Activated CD4-positive, alpha-beta T cell treated with anti-CD3 and anti-CD28 coated beads for 36 hours (primary cell): ENCODE measurements at regions of chr12 and their contacts with region 1.

Region 1: DNA sequence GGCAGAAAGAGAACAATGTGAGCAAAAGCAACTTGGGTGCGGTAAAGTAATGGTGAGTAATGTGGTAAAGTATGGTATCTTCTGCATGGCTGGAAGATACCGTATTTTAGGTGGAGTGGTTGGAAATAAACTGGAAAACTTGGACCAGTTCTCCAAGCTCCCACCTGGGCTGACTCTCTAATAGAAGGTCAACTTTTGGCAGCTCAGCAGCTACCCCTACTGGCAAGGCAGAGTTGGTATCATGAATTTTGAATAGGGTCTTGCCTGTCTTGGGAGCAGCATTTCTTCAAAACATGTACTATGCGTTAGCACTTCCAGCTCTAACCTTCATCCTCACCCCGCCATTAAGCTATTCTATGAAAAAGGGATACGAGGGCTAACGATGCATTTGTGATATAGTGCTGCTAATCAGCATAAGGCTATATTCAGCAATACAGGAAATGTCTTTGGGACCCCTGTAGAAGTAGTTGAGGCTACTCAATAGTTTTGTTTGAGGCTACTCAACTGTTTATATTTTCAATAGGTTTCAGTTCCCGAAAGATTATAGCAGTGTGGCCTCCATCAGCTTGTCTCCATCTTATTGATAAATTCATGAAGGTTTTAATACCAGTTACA is 276.3 kb upstream of the FAR2 start:
- DNase-seq: peak; percentile 61
- ATAC-seq: no peak
- H3K4me3 Mint-ChIP-seq: no peak overlapping the region
- H3K27ac Mint-ChIP-seq: no peak overlapping the region
- H3K4me1 Mint-ChIP-seq: no peaks in the 10 kb centered on the region
- H3K27me3 Mint-ChIP-seq: peaks cover 7% of the 10 kb centered on the region

Region 2: DNA sequence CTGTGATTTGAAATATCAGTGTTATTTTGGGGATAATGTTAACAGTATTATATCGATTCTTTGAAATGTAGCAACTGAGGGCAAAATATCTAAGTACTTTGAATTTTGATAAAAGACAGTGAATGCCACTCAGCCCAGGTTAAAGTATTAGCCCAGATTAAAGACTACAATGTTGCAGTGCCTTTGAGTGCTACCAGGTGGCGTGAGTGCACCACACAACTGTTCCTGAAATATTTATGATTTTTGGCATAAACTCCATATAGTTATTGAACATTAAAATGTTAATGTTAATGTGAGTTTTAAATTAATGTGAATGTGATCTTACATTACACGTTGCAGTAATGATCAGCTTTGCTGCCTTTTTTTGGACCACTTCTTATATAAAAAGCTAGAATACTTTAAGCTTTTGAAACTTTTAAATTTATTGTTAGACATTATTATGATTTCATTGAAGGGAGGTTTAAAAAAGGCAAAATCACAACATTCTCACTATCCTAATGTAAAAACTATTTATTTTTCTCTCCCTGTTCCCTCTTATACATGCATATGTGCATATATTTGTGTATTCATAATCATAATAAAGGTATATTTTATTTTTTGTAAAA is 1139.6 kb before region 1 on chr12:
- CTCF ChIA-PET with region 1: interaction called, 4 read pairs
- POLR2A ChIA-PET with region 1: no interaction called
- intact Hi-C with region 1: loop called in 1 of 2 experiments (anchors 2 kb)
- DNase-seq: peak; percentile 60
- ATAC-seq: peak; percentile 42
- H3K4me3 Mint-ChIP-seq: no peak overlapping the region
- H3K27ac Mint-ChIP-seq: no peak overlapping the region
- H3K4me1 Mint-ChIP-seq: no peaks in the 10 kb centered on the region
- H3K27me3 Mint-ChIP-seq: no peaks in the 10 kb centered on the region

Region 3: GRCh38 chr12:27969624-27970400 is 902.9 kb before region 1 on chr12:
- CTCF ChIA-PET with region 1: no interaction called
- POLR2A ChIA-PET with region 1: no interaction called
- intact Hi-C with region 1: loop called in 1 of 2 experiments (anchors 10 kb)
- DNase-seq: peak; percentile 77
- ATAC-seq: peak; percentile 77
- H3K4me3 Mint-ChIP-seq: peak overlapping the region; percentile 70
- H3K27ac Mint-ChIP-seq: no peak overlapping the region
- H3K4me1 Mint-ChIP-seq: peaks cover 25% of the 10 kb centered on the region
- H3K27me3 Mint-ChIP-seq: peaks cover 76% of the 10 kb centered on the region